Aorta (tissue), 5 donors: ENCODE measurements at regions of chr4 and their contacts with region 1.

Region 1: DNA sequence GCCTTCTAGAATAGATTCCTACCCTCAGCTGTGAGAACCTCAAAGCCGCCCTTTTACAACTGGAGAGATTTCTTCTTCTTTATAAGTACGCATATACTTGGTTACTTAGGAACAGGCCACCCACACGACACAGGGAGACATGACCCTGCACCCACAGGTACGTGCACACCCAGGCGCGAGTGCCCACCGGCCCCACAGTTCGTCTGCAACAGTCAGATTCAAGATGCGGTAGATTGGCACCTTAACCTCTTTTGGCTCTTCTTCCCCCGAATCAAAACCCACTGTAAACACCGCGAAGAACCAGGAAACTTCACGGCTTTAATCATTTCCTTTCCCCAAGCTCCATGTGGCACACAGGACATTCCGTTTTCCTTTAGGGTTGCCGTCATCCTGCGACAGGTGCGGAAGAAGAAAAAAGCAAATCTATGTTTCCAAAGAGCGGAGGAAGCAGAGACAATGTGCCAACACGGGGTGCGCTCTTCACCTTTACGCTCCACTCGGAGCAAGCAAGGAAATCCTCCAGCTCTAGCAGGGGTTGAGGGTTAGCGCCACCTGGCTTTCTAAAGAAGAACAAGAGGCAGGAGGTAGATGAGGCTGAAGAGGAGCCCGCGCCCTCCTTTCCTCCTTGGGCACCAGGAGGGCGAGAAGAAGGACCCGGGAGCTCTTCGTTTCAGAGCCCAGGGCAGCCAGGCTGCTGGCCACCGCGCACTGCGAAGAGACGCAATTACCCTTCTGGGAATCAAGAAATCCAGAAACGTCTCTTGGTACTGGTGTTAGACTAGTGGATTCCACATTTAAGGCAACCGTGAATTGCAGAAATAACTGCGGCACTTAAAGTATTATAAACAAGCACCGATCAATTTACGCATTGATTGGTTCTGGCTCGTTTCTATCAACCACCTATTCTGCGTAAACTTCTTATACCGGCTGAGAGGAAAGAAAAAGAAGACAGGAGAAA is 35.7 kb downstream of the HAND2 start:
- DNase-seq: peak; percentile 68 to 74
- ATAC-seq: peak; percentile 75
- H3K4me3 ChIP-seq: peak overlapping the region; percentile 37 to 76
- H3K27ac ChIP-seq: no peak overlapping the region
- H3K4me1 ChIP-seq: peaks cover 0 to 4% of the 10 kb centered on the region in 2 donors
- H3K27me3 ChIP-seq: no peaks in the 10 kb centered on the region

Region 2: DNA sequence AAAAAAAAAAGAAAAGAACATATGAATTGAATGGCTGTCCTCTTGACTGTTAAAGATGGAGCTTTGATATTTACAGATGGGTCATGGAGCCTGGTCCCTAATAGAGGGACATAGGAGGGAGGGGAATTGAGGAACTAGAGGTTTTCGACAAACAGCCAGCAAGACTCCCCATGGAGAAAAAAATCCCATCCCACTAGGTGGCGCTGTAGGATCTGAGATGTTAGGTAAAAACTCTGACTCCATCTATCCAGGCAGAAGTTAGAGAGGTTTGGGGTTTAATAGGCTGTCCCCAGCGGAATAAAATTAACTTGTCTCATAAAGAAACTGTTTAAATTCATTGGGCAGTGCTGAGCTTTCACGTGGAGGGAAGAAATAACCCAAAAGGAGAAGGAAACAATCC is 206.0 kb before region 1 on chr4:
- intact Hi-C with region 1: no loop called
- DNase-seq: peak in 1 of 2 donors; percentile 68
- ATAC-seq: no peak
- H3K4me3 ChIP-seq: no peak overlapping the region
- H3K27ac ChIP-seq: no peak overlapping the region
- H3K4me1 ChIP-seq: peaks cover 0 to 2% of the 10 kb centered on the region in 2 donors
- H3K27me3 ChIP-seq: no peaks in the 10 kb centered on the region

Region 3: GRCh38 chr4:173318648-173319211 is 175.6 kb before region 1 on chr4:
- intact Hi-C with region 1: loop called (anchors 5 kb)
- DNase-seq: no peak
- ATAC-seq: peak; percentile 69
- H3K4me3 ChIP-seq: no peak overlapping the region
- H3K27ac ChIP-seq: no peak overlapping the region
- H3K4me1 ChIP-seq: no peaks in the 10 kb centered on the region
- H3K27me3 ChIP-seq: no peaks in the 10 kb centered on the region

Region 4: GRCh38 chr4:173509036-173510001 is 15.0 kb after region 1 on chr4:
- intact Hi-C with region 1: no loop called
- DNase-seq: peak; percentile 76 to 77
- ATAC-seq: peak; percentile 46
- H3K4me3 ChIP-seq: peak overlapping the region; percentile 60 to 65
- H3K27ac ChIP-seq: peak overlapping the region; percentile 58 to 94
- H3K4me1 ChIP-seq: no peaks in the 10 kb centered on the region
- H3K27me3 ChIP-seq: no peaks in the 10 kb centered on the region

Region 5: DNA sequence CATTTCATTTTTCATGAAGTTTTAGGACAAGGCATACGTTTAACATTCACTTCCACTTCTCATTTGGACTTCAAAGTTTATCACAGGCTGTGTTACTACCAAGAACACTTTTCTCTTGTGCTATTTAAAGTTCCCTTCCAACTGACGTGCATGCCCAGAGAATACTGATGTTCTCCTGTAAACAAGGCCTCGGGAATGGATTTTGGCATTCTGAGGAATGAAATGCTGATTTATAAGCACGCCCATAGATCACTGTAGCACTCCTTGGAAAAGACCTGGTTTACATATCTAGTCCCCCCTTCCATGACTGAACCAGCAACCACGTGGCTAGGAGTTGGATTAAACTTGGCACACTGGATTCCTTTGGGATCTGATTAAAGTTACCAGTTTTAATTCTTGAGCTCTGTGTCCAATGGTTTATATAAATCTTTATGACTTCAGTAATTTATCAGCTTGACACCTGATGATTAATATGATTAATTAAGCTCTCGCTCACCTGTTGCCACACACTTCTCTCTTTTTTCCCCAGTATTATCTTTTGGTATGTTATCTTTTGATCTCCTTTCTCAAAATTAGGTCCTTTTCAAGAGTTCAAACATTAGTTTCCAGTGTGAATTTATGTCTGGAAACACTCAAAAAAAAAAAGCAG is 158.1 kb after region 1 on chr4:
- intact Hi-C with region 1: no loop called
- DNase-seq: no peak
- ATAC-seq: no peak
- H3K4me3 ChIP-seq: no peak overlapping the region
- H3K27ac ChIP-seq: no peak overlapping the region
- H3K4me1 ChIP-seq: peaks cover 0 to 1% of the 10 kb centered on the region in 2 donors
- H3K27me3 ChIP-seq: no peaks in the 10 kb centered on the region

Region 6: GRCh38 chr4:173935622-173936405 is 441.5 kb after region 1 on chr4:
- intact Hi-C with region 1: no loop called
- DNase-seq: no peak
- ATAC-seq: no peak
- H3K4me3 ChIP-seq: no peak overlapping the region
- H3K27ac ChIP-seq: no peak overlapping the region
- H3K4me1 ChIP-seq: peaks cover 0 to 7% of the 10 kb centered on the region in 2 donors
- H3K27me3 ChIP-seq: no peaks in the 10 kb centered on the region